Panc1 (cell line): ENCODE measurements at regions of chr17 and their contacts with region 1.

Region 1: GRCh38 chr17:76515274-76515949 is 14.2 kb upstream of the RHBDF2 start:
- DNase-seq: no peak
- ATAC-seq: no peak
- H3K4me3 ChIP-seq: no peak overlapping the region
- H3K27ac ChIP-seq: no peak overlapping the region
- H3K4me1 ChIP-seq: no peaks in the 10 kb centered on the region
- H3K27me3 ChIP-seq: no peaks in the 10 kb centered on the region
- CTCF ChIP-seq: no peak

Region 2: DNA sequence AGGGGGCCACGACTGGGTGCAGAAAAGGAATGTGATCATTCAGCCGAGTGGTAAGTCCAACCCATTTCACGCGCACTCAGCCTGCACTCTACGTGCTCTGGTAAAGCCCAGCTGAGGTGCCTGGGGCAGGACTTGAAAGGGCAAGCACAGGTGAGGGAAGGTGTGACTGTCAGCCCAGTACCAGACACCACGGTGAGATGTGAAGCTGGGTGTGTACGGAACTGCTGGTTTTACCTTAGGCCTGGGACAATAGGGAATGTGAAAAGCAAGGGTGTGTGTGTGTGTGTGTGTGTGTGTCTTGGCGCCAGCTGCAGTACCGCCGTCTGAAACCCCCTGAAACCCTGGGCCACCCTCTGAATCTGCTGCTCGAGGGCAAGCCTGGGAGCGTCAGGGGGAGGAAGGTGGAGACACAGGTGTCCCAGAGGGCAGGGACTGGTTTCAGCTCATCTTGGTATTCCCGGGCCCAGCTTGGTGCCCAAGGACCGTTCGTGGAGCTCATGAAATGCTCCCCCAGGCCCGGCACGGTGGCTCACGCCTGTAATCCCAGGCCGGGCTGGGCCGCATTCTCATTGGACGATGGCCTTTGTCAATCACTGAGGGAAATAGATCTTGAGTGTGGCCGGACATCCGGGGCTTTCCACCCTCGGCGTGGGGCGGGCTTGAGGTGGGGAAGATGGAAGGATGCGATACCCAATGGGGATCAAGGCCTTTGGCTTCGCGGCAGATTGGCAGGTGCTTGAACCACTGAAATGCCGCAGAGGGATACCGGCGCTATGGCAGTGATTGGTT is 155.9 kb after region 1 on chr17:
- CTCF ChIA-PET with region 1: interaction called, 13 read pairs
- POLR2A ChIA-PET with region 1: no interaction called
- in situ Hi-C with region 1: no loop called
- intact Hi-C with region 1: no loop called
- DNase-seq: peak; percentile 97
- ATAC-seq: peak; percentile 99
- H3K4me3 ChIP-seq: peak overlapping the region; percentile 82 to 94
- H3K27ac ChIP-seq: peak overlapping the region; percentile 99
- H3K4me1 ChIP-seq: peaks cover 16% of the 10 kb centered on the region
- H3K27me3 ChIP-seq: no peaks in the 10 kb centered on the region
- CTCF ChIP-seq: no peak